ENCODE measurements at regions of chrX and their contacts with region 1.

Region 1: DNA sequence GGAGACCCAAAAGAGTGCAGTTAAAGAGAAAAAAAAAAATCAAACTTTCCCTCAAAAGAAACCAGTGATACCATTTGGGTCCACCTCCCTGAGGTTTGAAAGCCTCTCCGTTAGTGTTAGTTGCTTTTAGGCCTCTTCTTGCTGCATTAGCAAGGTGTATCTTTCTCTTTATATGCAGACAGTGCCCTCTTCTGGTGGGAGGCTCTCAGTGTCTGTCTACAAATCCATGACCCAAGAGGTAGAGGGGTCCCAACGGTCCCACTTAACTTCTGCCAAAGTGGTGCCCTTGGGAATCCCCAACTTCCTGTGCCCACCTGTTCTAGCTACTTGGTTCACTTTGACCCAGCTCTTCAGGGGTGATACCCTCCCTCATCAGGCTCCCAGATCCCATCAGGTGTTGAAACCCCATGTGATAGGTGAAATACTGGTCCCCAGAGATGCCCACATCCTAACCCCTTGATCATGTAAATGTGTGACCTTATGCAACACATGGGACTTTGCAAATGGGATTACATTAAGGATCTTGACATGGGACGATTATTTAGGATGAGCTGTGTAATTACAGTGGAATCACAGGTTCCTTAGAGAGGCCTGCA is 63.7 kb upstream of the CD99 start:
- DNase-seq: peak in 7 of 9 donors; percentile 34 to 49 (median 40)
- ATAC-seq: peak; percentile 61
- H3K4me3 ChIP-seq: no peak overlapping the region
- H3K4me3 Mint-ChIP-seq: peak overlapping the region in 3 of 10 donors; percentile 19 to 33 (median 20)
- H3K27ac ChIP-seq: no peak overlapping the region
- H3K27ac Mint-ChIP-seq: peak overlapping the region in 6 of 9 donors; percentile 28 to 100 (median 56)
- H3K4me1 ChIP-seq: peaks cover 16% of the 10 kb centered on the region in 2 donors
- H3K4me1 Mint-ChIP-seq: peaks cover 23 to 53% (median 51%) of the 10 kb centered on the region in 7 donors
- H3K27me3 ChIP-seq: no peaks in the 10 kb centered on the region
- H3K27me3 Mint-ChIP-seq: no peaks in the 10 kb centered on the region

Region 2: GRCh38 chrX:1264556-1264955 is 1362.8 kb before region 1 on chrX:
- CTCF ChIA-PET with region 1: no interaction called
- POLR2A ChIA-PET with region 1: no interaction called
- intact Hi-C with region 1: no loop called
- DNase-seq: no peak
- ATAC-seq: no peak
- H3K4me3 ChIP-seq: no peak overlapping the region
- H3K4me3 Mint-ChIP-seq: no peak overlapping the region
- H3K27ac ChIP-seq: no peak overlapping the region
- H3K27ac Mint-ChIP-seq: no peak overlapping the region
- H3K4me1 ChIP-seq: peaks cover 5 to 14% of the 10 kb centered on the region in 2 donors
- H3K4me1 Mint-ChIP-seq: peaks cover 18 to 32% (median 28%) of the 10 kb centered on the region in 7 donors
- H3K27me3 ChIP-seq: no peaks in the 10 kb centered on the region
- H3K27me3 Mint-ChIP-seq: no peaks in the 10 kb centered on the region

Region 3: DNA sequence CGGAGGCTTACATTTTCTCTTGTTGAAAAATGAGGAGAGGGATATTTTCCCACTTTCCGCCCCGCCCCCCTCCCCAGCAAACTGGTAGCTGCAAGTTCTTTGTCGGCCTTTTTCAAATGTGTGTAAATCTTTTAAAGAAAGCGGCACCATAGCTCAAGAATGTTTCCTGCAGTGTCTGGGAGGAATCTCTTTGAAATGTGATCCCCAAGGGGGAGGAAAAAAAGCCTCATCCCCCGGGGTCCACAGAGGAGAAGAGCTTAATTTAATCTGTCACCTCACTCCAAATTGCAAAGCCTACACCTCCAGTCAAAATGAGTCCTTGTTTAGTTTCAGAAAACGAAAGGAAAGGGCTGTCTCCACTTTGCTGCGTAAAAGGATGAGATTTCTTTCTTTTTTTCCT is 977.7 kb before region 1 on chrX:
- CTCF ChIA-PET with region 1: no interaction called
- POLR2A ChIA-PET with region 1: no interaction called
- intact Hi-C with region 1: loop called (anchors 1 kb)
- DNase-seq: no peak
- ATAC-seq: no peak
- H3K4me3 ChIP-seq: no peak overlapping the region
- H3K4me3 Mint-ChIP-seq: no peak overlapping the region
- H3K27ac ChIP-seq: no peak overlapping the region
- H3K27ac Mint-ChIP-seq: no peak overlapping the region
- H3K4me1 ChIP-seq: no peaks in the 10 kb centered on the region
- H3K4me1 Mint-ChIP-seq: peaks cover 0 to 9% (median 6%) of the 10 kb centered on the region in 7 donors
- H3K27me3 ChIP-seq: no peaks in the 10 kb centered on the region
- H3K27me3 Mint-ChIP-seq: peaks cover 0 to 8% (median 3%) of the 10 kb centered on the region in 5 donors

Region 4: DNA sequence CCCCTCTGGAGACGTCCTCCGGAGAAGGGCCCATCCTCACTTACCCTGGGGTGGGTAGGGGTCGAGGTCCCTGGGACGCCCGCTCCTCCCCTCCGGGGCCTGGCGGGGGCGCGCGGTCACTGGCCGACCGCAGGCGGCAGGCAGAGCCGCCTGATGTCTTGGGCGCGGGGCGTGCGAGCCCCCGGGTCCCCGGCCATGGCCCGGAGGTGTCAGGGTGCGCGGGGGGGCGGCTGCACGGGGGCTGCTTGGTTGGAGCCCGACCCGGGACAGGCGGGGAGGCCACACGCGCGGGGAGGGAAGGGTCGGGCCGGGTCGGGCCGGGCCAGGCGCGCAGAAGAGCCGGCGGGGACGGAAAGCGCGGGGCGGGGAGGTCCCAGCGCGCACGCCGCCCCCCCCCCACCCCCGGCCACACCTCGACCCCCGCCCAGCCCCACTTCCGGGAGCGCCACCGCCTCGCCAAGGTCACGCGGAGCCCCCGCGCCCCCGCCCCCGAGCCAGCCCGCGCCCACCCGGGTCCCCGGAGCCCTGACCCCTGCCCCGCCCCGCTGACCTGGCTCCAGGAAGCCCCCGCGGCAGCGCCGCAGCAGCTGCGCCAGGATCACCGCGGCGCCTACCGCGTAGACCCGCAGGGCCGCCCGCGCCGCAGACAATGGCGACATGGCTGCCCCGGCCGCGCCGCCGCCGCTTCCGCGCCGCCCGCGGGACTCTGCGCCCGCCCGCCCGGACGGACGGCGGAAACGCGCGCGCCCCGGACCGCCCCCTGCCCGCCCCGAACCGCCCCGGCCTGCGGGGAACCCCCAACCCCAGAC is 126.9 kb before region 1 on chrX and contains the starts of genes DHRSX and ZBED1:
- CTCF ChIA-PET with region 1: no interaction called
- POLR2A ChIA-PET with region 1: no interaction called
- intact Hi-C with region 1: loop called in 1 of 2 experiments (anchors 5 kb)
- DNase-seq: peak; percentile 16 to 71 (median 40)
- ATAC-seq: peak; percentile 78
- H3K4me3 ChIP-seq: peak within 1 kb of the TSS; percentile 65
- H3K4me3 Mint-ChIP-seq: peak within 1 kb of the TSS; percentile 75 to 90 (median 89)
- H3K27ac ChIP-seq: peak within 1 kb of the TSS; percentile 77
- H3K27ac Mint-ChIP-seq: peak within 1 kb of the TSS; percentile 81 to 94 (median 88)
- H3K4me1 ChIP-seq: peaks cover 0 to 10% of the 10 kb centered on the region in 2 donors
- H3K4me1 Mint-ChIP-seq: peaks cover 15 to 39% (median 29%) of the 10 kb centered on the region in 7 donors
- H3K27me3 ChIP-seq: no peaks in the 10 kb centered on the region
- H3K27me3 Mint-ChIP-seq: no peaks in the 10 kb centered on the region
- total RNA-seq, gene DHRSX: 15.6 to 26.2 (median 20.4) TPM
- total RNA-seq, gene ZBED1: 23.7 to 37.0 (median 27.4) TPM

Region 5: DNA sequence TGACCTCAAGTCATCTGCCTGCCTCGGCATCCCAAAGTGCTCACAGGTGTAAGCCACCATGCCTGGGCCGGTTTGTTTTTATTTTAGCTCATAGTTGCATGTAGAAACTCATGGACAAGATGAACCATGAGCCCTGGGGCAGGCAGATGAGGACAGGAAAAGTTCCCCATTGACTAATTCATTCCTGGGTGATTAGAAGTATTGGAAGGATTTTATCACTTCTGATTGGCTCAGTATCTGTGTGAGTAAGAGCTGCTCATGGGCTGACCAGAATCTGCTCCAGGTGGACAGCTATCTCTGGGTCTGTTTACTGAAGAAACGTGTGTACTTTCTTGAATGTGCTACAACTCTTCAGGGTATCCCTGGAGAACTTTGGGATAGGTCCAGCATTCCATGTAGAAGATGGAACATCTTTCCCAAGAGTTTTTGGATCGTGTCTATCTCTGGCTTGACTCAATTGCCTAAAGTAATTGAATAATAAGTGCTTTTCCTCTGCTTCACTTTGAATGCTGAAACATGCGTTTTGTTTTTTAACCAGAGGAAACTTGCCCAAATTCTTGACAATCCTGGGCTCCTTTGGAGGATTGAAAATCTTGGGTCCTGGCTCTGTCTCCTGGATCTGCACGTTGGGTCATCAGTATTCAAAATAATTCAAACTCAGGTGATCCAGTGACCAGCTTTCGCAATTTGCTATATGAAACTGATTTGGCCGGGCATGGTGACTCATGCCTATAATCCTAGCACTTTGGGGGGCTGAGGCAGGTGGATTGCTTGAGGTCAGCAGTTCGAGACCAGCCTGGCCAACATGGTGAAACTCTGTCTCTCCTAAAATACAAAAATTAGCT is 38.0 kb before region 1 on chrX:
- CTCF ChIA-PET with region 1: no interaction called
- POLR2A ChIA-PET with region 1: no interaction called
- intact Hi-C with region 1: loop called in 1 of 2 experiments (anchors 5 kb)
- DNase-seq: no peak
- ATAC-seq: no peak
- H3K4me3 ChIP-seq: no peak overlapping the region
- H3K4me3 Mint-ChIP-seq: no peak overlapping the region
- H3K27ac ChIP-seq: no peak overlapping the region
- H3K27ac Mint-ChIP-seq: no peak overlapping the region
- H3K4me1 ChIP-seq: no peaks in the 10 kb centered on the region
- H3K4me1 Mint-ChIP-seq: peaks cover 0 to 18% (median 15%) of the 10 kb centered on the region in 7 donors
- H3K27me3 ChIP-seq: no peaks in the 10 kb centered on the region
- H3K27me3 Mint-ChIP-seq: peaks cover 4 to 15% (median 6%) of the 10 kb centered on the region in 5 donors

Region 6: DNA sequence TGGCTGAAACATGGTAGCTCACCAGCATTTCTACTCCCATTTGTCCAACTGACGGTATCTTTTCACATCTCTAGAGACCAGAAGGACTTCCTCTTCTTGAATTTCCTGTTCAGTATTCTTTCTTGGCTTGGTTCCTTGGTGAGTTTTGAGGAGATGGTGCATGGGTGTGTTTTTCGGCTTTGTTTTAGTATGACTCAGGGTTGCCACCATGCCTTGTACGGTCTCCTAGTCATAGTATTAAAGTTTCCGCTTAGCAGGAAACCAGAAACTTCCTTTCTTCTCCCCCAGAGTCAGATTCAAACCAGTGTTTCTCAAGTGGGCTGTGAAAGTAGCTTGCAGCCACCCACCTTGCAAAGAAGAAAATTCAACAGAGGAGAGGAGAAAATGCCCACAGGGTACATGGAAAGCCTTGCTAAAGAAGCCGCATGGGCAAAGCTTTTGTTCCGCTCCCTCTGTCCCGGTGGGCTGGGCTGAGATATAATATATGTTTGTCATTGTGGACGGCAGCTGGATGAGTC is 69.4 kb after region 1 on chrX:
- CTCF ChIA-PET with region 1: no interaction called
- POLR2A ChIA-PET with region 1: no interaction called
- intact Hi-C with region 1: loop called (anchors 1 to 2 kb)
- DNase-seq: peak in 7 of 9 donors; percentile 37 to 75 (median 52)
- ATAC-seq: peak; percentile 82
- H3K4me3 ChIP-seq: peak overlapping the region; percentile 45
- H3K4me3 Mint-ChIP-seq: peak overlapping the region; percentile 68 to 96 (median 78)
- H3K27ac ChIP-seq: peak overlapping the region; percentile 18
- H3K27ac Mint-ChIP-seq: peak overlapping the region; percentile 23 to 95 (median 84)
- H3K4me1 ChIP-seq: peaks cover 60 to 82% of the 10 kb centered on the region in 2 donors
- H3K4me1 Mint-ChIP-seq: peaks cover 90 to 97% (median 92%) of the 10 kb centered on the region in 7 donors
- H3K27me3 ChIP-seq: no peaks in the 10 kb centered on the region
- H3K27me3 Mint-ChIP-seq: no peaks in the 10 kb centered on the region